A673 (cell line): ENCODE measurements at regions of chr7 and their contacts with region 1.

Region 1: DNA sequence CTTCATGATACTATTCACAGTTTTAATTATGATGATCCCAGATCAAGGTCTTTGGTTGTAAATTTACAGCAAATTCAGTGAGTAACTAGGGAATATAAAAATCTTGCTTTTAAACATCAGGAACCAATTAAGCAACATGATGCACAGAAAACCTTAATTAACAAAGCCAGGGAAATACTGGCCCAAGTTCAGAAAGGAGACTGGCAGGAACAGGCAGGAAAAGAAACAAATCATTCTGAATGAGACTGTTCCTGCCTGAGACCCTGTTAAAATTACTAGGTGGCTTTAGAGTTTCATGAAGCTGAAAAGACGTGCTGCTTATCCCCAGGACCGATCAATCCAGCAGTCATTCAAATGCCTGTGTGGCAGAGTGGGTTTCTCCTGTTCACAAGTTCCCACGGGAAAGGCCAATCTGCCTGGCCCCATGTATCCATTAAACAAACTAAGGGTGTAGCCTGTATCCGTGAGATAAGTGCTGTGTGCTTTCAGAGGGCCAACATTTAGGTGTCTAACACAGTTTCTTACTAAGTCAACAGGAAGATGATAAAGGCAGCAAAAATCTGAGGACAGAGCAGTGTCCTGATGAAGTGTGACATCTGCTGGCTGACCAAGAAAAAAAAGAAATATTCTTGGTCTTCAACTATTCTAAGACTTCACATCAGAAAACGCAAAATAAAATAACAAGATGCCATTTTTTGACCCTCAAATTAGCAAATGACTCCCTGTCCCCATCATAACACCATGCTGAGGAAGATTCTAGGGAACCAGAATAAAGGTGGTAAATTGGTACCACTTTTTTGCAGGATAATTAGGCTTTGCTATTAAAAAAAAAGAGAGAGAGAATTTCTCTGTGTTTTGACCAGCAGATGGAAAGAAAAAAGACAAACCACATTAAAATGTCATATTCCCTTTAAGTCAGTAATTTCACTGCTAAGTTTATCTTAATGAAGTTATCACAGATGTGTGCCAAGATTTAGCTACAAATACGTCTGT is 34.2 kb downstream of the PUS7 start:
- DNase-seq: peak; percentile 55
- H3K4me3 ChIP-seq: no peak overlapping the region
- H3K27ac ChIP-seq: no peak overlapping the region
- H3K4me1 ChIP-seq: peaks cover 3% of the 10 kb centered on the region
- H3K27me3 ChIP-seq: no peaks in the 10 kb centered on the region
- CTCF ChIP-seq: peak; percentile 59

Region 2: DNA sequence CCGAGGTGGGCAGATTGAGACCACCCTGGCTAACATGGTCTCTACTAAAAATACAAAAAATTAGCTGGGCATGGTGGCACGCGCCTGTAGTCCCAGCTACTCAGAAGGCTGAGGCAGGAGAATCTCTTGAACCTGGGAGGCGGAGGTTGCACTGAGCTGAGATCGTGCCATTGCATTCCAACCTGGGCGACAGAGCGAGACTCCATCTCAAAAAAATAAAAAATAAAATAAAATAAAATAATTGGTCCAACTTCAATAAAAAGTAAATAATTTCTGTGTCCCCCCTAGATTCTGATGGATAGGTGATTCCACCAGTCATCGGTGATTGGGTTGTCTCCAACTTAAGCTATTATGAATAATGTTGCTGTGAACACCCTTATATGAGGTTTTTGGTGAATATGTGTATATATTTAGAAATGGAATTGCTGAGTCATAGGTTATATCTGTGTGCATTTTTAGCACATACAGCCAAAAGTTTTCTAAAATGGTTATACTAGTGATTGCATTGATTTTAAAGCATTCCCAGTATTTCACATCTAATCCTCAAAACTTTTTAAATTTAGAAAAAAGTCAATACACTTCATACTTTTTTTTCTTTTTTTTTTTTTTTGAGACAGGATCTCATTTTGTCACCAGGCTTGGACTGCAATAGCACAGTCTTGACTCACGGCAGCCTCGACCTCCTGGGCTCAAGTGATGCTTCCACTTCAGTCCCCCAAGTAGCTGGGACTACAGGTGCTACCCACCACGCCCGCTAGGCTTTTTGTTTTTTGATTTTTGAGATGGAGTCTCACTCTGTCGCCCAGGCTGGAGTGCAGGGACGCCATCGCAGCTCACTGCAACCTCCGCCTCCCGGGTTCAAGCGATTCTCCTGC is 85.4 kb before region 1 on chr7:
- CTCF ChIA-PET with region 1: no interaction called
- POLR2A ChIA-PET with region 1: no interaction called
- intact Hi-C with region 1: loop called (anchors 5 kb)
- DNase-seq: no peak
- H3K4me3 ChIP-seq: no peak overlapping the region
- H3K27ac ChIP-seq: no peak overlapping the region
- H3K4me1 ChIP-seq: peaks cover 4% of the 10 kb centered on the region
- H3K27me3 ChIP-seq: no peaks in the 10 kb centered on the region
- CTCF ChIP-seq: no peak

Region 3: GRCh38 chr7:105429746-105430612 is 57.9 kb before region 1 on chr7:
- CTCF ChIA-PET with region 1: no interaction called
- POLR2A ChIA-PET with region 1: no interaction called
- intact Hi-C with region 1: loop called (anchors 2 kb)
- DNase-seq: peak; percentile 93
- H3K4me3 ChIP-seq: no peak overlapping the region
- H3K27ac ChIP-seq: no peak overlapping the region
- H3K4me1 ChIP-seq: peaks cover 17% of the 10 kb centered on the region
- H3K27me3 ChIP-seq: peaks cover 21% of the 10 kb centered on the region
- CTCF ChIP-seq: peak; percentile 73

Region 4: DNA sequence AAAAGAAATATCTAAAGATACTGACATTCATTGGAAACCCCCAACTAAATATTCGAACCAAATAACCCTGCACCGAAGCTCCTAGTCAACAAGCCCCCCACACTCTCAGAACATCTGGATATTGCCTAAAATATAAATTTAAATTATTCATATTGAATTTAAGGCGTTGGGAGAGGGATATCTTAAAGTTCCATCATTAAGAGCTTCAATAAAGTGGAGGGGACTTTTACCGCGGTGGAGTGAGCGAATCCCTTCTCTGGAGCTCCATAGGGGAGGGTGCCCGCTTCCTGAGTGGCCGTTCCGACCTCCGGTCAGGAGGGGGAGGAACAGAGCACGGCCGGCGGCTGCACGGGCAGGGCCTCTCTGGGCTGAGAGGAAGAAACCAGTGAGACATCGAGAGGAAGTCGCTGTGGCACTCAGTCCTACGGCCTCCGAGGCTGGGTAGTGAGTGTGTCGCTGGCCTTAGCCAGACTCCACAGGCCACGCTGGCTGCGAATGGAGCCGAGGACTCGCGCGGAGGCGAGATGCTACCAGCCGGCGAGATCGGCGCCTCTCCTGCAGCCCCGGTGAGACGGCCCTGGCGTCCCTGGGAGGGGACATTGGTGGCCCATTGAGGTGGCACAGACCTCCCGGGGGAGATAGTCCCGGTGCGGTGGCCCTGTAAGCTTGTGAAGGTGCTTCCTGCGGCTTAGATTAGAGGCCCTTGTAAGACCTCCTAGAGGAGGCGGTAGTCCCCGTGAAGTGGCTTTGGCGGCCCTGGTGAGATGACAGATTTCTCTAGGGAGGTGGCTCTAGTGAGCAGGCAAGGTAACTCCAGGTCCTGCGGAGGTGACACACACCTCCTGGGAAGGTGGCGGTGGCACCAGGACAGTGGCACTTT is 44.2 kb after region 1 on chr7 and contains the start of gene RINT1:
- CTCF ChIA-PET with region 1: interaction called, 13 read pairs
- POLR2A ChIA-PET with region 1: no interaction called
- intact Hi-C with region 1: no loop called
- DNase-seq: peak; percentile 94
- H3K4me3 ChIP-seq: peak within 1 kb of the TSS; percentile 90
- H3K27ac ChIP-seq: peak within 1 kb of the TSS; percentile 89
- H3K4me1 ChIP-seq: peaks cover 6% of the 10 kb centered on the region
- H3K27me3 ChIP-seq: no peaks in the 10 kb centered on the region
- CTCF ChIP-seq: peak; percentile 91
- total RNA-seq, gene RINT1: 32.3 and 34.9 TPM in 2 replicates

Region 5: GRCh38 chr7:105713488-105714465 is 225.9 kb after region 1 on chr7:
- CTCF ChIA-PET with region 1: no interaction called
- POLR2A ChIA-PET with region 1: no interaction called
- intact Hi-C with region 1: no loop called
- DNase-seq: no peak
- H3K4me3 ChIP-seq: no peak overlapping the region
- H3K27ac ChIP-seq: no peak overlapping the region
- H3K4me1 ChIP-seq: no peaks in the 10 kb centered on the region
- H3K27me3 ChIP-seq: no peaks in the 10 kb centered on the region
- CTCF ChIP-seq: no peak